ENCODE measurements at regions of chr20 and their contacts with region 1.

Region 1: DNA sequence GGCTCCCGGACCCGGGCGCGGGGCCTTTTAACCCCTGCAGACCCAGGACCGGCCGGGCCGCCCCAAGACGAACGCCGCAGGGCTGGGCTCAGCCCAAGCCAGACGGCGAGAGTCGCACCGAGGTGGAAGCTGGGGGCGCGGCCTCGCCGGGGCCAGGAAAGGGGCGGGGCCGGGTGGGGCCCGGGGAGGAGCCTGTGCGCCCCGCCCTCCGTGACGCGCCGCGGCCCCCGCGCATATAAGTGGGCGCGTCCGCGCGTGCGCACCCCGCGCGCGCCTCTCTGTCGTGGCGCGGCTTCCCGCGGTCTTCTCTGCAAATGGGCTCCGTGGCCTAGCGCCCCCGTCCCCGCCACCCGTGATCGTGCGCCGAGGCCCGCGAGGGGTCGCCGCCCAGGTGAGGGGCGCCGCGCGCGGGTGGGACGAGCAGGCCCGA is at the start of gene PPDPF:
- DNase-seq: peak; percentile 68
- H3K4me3 ChIP-seq: peak within 1 kb of the TSS; percentile 60 to 77 (median 69)
- H3K27ac ChIP-seq: peak within 1 kb of the TSS; percentile 25
- H3K4me1 ChIP-seq: peaks cover 12% of the 10 kb centered on the region
- H3K27me3 ChIP-seq: no peaks in the 10 kb centered on the region
- CTCF ChIP-seq: no peak
- POLR2A ChIP-seq: peak; percentile 95
- total RNA-seq, gene PPDPF: 219 and 233 TPM in 2 replicates

Region 2: DNA sequence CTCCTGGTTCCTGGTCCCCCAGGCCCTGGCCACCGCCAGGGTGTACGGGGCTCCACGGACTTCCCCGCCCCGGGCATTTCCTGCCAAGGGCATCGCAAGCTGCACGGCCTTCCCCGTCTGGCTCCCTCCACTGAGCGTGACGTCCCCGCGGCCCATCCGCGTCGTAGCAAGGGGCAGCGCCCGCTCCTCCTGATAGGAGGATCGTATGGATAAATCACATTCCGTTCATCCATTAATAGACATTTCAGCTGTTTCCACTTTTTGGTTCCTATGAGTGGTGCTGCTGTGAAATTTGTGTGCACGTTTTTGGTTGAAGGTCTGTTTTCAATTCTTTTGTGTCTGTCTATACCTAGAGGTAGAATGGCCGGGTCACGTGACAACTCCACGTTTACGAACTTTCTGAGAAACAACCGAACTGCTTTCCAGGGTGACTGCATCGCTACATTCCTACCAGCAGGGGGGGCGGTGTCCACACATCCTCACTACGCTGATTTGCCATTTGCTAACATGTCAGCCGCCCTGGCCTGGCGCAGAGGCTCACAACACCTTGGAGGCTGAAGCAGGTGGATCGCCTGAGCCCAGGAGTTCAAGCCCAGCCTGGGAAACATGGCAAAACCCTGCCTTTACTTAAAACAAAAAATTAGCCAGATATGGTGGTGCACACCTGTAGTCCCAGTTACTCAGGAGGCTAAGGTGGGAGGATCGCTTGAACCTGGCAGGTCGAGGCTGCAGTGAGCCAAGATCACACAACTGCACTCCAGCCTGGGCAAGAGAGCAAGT is 85.7 kb before region 1 on chr20:
- CTCF ChIA-PET with region 1: no interaction called
- POLR2A ChIA-PET with region 1: no interaction called
- dilution Hi-C with region 1: no loop called
- intact Hi-C with region 1: loop called (anchors 10 kb)
- DNase-seq: peak; percentile 80
- H3K4me3 ChIP-seq: no peak overlapping the region
- H3K27ac ChIP-seq: no peak overlapping the region
- H3K4me1 ChIP-seq: no peaks in the 10 kb centered on the region
- H3K27me3 ChIP-seq: no peaks in the 10 kb centered on the region
- CTCF ChIP-seq: peak; percentile 82
- POLR2A ChIP-seq: no peak

Region 3: DNA sequence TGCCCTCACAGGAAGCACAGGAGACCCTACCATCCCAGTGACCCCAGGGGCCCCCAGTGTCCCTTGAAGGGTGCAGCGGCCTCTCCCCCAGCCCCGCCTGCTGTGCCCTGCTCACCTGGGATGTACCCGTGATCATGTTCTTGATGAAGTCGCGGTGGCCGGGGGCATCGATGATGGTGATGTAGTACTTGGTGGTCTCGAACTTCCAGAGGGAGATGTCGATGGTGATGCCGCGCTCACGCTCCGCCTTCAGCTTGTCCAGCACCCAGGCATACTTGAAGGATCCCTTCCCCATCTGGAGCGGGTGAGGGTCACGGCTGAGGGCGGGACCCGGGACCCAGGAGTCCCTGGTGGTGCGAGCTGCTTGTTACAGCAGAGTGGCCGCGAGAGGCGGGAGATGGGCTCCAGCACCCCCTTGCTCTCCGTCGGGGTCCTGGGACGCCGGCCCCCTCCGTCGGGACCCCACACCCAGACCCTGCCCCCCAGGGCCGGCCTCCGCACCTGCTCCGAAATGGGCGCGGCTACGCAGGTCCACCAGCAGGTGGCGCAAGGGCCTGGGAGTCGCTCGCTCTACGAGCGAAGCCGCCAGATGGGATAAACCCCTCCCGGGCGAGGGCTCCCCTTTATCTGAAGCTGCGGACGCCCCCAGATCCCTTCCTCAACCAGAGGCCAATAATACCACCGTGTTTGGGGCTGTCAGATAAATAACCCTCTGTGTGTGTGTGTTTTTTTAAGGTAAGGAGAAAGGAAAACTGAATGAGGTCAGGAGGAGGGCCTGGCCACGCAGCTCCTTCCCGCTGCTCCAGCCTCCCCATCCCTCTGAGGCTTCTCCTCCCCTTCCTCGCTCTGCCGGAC is 24.6 kb before region 1 on chr20:
- CTCF ChIA-PET with region 1: interaction called, 28 read pairs
- POLR2A ChIA-PET with region 1: interaction called, 3 read pairs
- dilution Hi-C with region 1: no loop called
- intact Hi-C with region 1: loop called (anchors 1 kb)
- DNase-seq: peak; percentile 44
- H3K4me3 ChIP-seq: no peak overlapping the region
- H3K27ac ChIP-seq: no peak overlapping the region
- H3K4me1 ChIP-seq: no peaks in the 10 kb centered on the region
- H3K27me3 ChIP-seq: no peaks in the 10 kb centered on the region
- CTCF ChIP-seq: peak; percentile 92 to 96
- POLR2A ChIP-seq: no peak

Region 4: GRCh38 chr20:63587776-63588591 is 67.5 kb after region 1 on chr20:
- CTCF ChIA-PET with region 1: no interaction called
- POLR2A ChIA-PET with region 1: no interaction called
- dilution Hi-C with region 1: no loop called
- intact Hi-C with region 1: no loop called
- DNase-seq: no peak
- H3K4me3 ChIP-seq: no peak overlapping the region
- H3K27ac ChIP-seq: no peak overlapping the region
- H3K4me1 ChIP-seq: no peaks in the 10 kb centered on the region
- H3K27me3 ChIP-seq: no peaks in the 10 kb centered on the region
- CTCF ChIP-seq: no peak
- POLR2A ChIP-seq: no peak

Region 5: DNA sequence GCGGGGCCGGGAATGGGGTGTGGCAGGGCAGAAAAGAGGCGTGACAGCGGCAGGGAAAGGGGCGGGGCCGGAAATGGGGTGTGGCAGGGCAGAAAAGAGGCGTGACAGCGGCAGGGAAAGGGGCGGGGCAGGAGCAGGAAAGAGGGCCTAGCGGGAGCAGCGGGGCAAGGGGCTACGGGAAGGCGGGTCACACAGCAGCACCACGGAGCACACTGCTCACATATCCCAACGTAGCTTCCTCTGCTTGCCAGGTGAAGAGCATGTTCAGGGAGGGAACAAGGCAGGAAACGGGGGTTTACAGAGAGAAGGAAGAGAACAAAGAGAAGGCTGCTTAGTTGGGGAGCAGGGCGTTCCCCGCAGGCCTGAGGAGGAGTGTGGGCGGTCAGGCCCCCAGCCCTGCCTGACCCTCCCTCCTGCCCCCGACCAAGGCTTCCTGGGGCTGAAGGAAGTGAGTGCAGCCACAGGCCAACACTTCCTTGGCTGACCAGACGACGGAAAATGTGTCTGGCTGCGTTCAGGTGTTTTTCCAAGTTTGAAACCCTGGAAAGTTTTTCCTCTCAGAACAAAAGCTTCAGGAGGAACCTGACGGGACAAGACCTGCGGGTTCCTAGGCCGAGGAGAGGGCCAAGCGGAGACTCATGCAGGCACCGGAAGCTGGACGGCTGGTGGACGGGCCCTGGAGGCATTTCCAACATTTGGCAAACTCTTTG is 421.9 kb after region 1 on chr20:
- CTCF ChIA-PET with region 1: no interaction called
- POLR2A ChIA-PET with region 1: no interaction called
- dilution Hi-C with region 1: no loop called
- intact Hi-C with region 1: loop called (anchors 1 kb)
- DNase-seq: peak; percentile 43
- H3K4me3 ChIP-seq: no peak overlapping the region
- H3K27ac ChIP-seq: peak overlapping the region; percentile 1
- H3K4me1 ChIP-seq: peaks cover 14% of the 10 kb centered on the region
- H3K27me3 ChIP-seq: no peaks in the 10 kb centered on the region
- CTCF ChIP-seq: no peak
- POLR2A ChIP-seq: no peak